Breast epithelium (tissue), 4 donors: ENCODE measurements at regions of chr5 and their contacts with region 1.

Region 1: DNA sequence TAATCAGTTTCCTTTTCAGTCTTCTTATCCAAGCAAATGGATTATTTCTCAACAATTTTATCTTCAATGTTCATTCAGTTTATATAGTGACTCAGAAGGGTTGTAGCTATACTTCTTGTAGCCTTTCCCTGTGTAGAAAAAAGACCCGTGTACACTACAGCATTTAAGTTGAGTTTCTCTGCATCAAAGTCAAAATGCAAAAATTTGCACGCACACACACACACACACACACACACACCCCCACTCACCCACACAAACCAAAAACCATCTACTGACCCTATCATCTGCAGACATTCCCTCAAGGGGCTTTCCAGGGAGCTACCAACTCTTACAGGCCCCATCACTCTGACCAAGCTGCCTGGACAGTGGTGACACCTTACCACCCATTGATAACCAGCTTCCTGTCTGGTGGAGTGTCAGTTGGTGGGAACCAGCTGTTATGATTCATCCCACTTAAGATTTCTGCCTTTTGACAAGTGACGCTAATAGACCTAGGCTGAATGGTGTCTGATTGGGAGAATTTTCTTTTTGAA is 12.2 kb upstream of the ELL2 start:
- DNase-seq: no peak
- H3K4me3 ChIP-seq: no peak overlapping the region
- H3K27ac ChIP-seq: no peak overlapping the region
- H3K4me1 ChIP-seq: no peaks in the 10 kb centered on the region
- H3K27me3 ChIP-seq: no peaks in the 10 kb centered on the region
- CTCF ChIP-seq: no peak
- POLR2A ChIP-seq: no peak

Region 2: GRCh38 chr5:96035796-96036195 is 61.9 kb after region 1 on chr5:
- intact Hi-C with region 1: loop called (anchors 2 kb)
- DNase-seq: no peak
- H3K4me3 ChIP-seq: no peak overlapping the region
- H3K27ac ChIP-seq: no peak overlapping the region
- H3K4me1 ChIP-seq: no peaks in the 10 kb centered on the region
- H3K27me3 ChIP-seq: no peaks in the 10 kb centered on the region
- CTCF ChIP-seq: no peak
- POLR2A ChIP-seq: no peak